Activated naive CD4-positive, alpha-beta T cell treated with anti-CD3 and anti-CD28 coated beads for 36 hours (primary cell): ENCODE measurements at regions of chr1 and their contacts with region 1.

Region 1: DNA sequence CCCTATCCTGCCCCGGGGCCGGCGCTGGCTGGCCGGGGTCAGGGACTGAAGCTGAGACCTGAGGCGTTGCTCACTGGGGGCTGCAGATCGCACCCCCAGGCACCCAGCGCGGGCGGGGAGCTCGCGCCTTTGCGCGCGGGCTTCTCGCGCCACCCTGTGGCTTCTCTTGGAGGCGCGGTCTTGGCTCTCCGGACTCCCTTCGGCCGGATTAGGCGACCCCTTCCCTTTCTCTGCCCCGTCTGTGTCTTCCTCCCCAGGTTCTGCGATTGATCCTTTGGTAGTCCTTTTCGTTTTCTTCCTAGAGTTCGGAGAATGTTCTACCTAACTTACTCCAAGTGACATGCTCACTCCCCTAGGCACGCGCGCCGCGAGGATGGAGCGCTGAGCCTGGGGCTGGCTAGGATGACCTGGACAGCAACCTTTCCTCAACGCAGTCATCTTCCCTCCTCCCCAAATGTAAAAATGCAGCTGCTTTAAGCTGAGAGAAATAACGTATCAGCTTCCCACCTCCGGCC is 495 bp upstream of the NTRK1 start:
- DNase-seq: peak; percentile 56
- H3K4me3 Mint-ChIP-seq: peak overlapping the region; percentile 64
- H3K27ac Mint-ChIP-seq: no peak overlapping the region
- H3K4me1 Mint-ChIP-seq: peaks cover 20% of the 10 kb centered on the region
- H3K27me3 Mint-ChIP-seq: peaks cover 56% of the 10 kb centered on the region

Region 2: GRCh38 chr1:156705918-156706656 is 154.1 kb before region 1 on chr1:
- CTCF ChIA-PET with region 1: interaction called, 14 read pairs
- intact Hi-C with region 1: loop called (anchors 5 kb)
- DNase-seq: peak; percentile 77
- H3K4me3 Mint-ChIP-seq: peak overlapping the region; percentile 76
- H3K27ac Mint-ChIP-seq: peak overlapping the region; percentile 46
- H3K4me1 Mint-ChIP-seq: peaks cover 27% of the 10 kb centered on the region
- H3K27me3 Mint-ChIP-seq: peaks cover 25% of the 10 kb centered on the region

Region 3: DNA sequence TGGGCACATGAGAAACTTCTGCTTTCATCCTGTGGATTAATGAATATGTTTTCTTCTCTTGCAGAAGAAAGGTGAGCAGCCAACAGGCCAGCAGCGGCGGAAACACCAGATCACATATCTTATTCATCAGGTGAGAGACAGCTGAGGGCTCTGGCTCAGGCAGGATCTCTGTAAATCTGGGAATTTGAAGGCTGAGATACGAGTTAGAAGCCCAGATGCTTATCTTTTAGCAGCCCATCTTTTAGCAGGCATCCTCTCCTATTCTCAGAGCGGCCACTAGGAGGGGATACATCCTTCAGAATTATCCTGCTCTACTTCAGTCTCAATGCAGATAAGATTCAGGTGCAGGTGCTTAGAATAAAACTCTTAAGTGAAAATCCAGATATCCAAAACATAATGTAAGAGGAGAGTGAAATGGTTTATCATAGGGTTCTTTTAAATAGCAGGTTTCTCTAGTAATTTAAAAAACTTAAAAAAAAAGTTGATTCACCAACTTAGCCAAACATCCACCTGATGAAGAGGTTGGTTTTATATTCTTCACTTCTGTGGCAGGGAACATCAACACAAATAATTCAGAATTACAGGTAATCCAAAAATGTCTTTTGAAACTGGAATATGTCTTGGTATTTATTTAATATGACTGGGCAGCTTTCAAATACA is 62.8 kb before region 1 on chr1:
- CTCF ChIA-PET with region 1: interaction called, 177 read pairs
- intact Hi-C with region 1: loop called (anchors 1 kb)
- DNase-seq: peak; percentile 78
- H3K4me3 Mint-ChIP-seq: no peak overlapping the region
- H3K27ac Mint-ChIP-seq: no peak overlapping the region
- H3K4me1 Mint-ChIP-seq: no peaks in the 10 kb centered on the region
- H3K27me3 Mint-ChIP-seq: no peaks in the 10 kb centered on the region

Region 4: DNA sequence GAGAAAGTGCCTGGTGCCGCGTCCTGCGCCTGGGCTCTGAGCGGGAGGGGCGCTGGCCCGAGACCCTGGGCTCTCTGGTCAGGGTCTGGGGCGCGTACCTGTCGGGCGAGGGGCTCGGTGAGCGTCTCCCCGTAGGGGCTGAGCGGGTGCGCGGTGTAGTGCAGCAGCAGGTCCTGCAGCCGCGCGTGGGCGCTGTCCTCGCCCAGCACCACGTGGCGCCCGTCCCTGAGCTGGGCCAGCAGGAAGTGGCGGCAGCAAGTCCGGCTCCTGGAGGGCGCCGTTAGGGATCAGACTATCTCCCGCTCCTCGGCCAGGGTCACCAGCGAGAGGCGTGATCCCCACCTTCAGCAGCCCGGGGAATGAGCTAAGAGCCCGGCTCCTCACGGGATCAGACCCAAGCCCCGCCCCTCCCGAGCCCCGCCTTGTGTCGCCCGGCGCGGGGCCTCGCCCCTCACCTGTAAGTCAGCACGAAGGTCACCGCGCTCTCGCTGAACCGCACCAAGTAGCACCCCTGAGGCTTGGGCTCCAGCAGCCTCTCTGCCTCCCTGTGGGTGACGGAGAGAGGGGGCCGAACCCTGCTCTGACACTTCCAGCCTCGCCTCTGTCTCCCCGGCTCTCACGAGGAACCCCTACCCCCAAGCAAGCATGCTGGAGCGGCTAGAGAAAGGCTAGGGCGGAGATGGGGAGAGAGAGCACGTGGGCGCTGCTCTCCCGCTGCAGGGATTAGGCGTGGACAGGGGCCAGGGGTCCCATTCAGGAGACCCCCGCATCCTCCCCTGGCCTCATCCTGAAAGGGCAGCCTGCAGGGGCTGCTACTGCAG is 46.2 kb before region 1 on chr1:
- CTCF ChIA-PET with region 1: interaction called, 18 read pairs
- intact Hi-C with region 1: loop called (anchors 1 kb)
- DNase-seq: peak; percentile 77
- H3K4me3 Mint-ChIP-seq: peak overlapping the region; percentile 93
- H3K27ac Mint-ChIP-seq: peak overlapping the region; percentile 100
- H3K4me1 Mint-ChIP-seq: peaks cover 62% of the 10 kb centered on the region
- H3K27me3 Mint-ChIP-seq: no peaks in the 10 kb centered on the region

Region 5: GRCh38 chr1:156838981-156839410 is 21.2 kb before region 1 on chr1:
- CTCF ChIA-PET with region 1: interaction called, 133 read pairs
- intact Hi-C with region 1: loop called (anchors 1 kb)
- DNase-seq: peak; percentile 58
- H3K4me3 Mint-ChIP-seq: no peak overlapping the region
- H3K27ac Mint-ChIP-seq: no peak overlapping the region
- H3K4me1 Mint-ChIP-seq: peaks cover 26% of the 10 kb centered on the region
- H3K27me3 Mint-ChIP-seq: peaks cover 34% of the 10 kb centered on the region

Region 6: DNA sequence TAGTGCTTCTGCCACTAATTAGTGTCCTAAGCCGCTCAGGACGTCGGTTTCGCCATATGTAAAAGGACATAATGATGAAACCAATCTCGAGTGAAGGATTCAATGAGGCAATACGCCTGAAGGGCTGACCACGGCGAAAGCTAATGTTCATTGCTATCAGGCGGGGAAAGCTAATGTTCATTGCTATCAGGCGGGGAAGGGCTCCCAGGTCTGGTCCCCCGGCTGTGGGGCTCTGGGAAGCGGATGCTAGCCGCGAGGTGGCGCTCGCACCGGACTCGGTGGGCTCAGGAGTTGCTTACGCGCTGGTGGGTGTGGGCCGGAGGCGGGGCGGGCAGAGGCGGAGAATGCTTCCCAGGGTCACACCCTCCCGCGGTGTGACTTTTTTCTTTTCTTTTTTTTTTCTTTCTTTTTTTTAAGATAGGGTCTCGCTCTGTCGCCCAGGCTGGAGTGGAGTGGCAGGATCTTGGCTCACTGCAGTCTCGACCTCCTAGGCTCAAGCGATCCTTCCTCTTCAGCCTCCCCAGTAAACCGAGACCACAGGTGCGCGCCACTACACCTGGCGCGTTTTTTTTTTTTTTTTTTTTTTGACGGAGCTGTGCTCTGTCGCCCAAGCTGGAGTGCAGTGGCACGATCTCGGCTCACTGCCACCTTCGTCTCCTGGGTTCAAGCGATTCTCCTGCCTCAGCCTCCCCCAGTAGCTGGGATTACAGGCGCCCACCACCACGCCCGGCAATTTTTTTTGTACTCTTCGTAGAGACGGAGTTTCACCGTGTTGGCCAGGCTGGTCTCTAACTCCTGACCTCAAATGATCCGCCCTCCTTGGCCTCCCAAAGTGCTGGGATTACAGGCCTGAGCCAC is 32.2 kb after region 1 on chr1:
- CTCF ChIA-PET with region 1: interaction called, 47 read pairs
- intact Hi-C with region 1: no loop called
- DNase-seq: peak; percentile 92
- H3K4me3 Mint-ChIP-seq: peak overlapping the region; percentile 41
- H3K27ac Mint-ChIP-seq: no peak overlapping the region
- H3K4me1 Mint-ChIP-seq: peaks cover 11% of the 10 kb centered on the region
- H3K27me3 Mint-ChIP-seq: peaks cover 47% of the 10 kb centered on the region